Panc1 (cell line): ENCODE measurements at regions of chr11 and their contacts with region 1.

Region 1: DNA sequence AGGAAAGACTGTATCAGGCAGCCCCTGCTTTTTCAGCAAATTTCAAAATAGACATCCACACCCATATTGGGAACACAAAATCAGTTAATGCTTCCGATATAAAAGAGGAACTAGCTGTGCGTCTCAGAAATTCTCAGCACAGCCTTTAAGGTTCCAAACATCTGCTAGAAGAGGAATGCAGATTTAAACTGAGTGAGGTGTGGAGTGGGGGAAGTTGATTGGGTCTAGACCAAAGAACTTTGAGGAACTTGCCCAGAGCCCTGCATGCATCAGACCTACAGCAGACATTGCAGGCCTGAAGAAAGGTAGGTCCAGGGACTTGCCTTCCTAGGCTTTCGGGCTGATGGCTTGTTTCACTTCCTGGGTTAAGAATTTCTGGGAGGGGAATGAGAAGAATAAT is at the start of gene MS4A4A:
- DNase-seq: no peak
- ATAC-seq: no peak
- H3K4me3 ChIP-seq: no peak within 1 kb of the TSS
- H3K27ac ChIP-seq: no peak within 1 kb of the TSS
- H3K4me1 ChIP-seq: no peaks in the 10 kb centered on the region
- H3K27me3 ChIP-seq: no peaks in the 10 kb centered on the region
- CTCF ChIP-seq: no peak
- total RNA-seq, gene MS4A4A: not detected

Region 2: DNA sequence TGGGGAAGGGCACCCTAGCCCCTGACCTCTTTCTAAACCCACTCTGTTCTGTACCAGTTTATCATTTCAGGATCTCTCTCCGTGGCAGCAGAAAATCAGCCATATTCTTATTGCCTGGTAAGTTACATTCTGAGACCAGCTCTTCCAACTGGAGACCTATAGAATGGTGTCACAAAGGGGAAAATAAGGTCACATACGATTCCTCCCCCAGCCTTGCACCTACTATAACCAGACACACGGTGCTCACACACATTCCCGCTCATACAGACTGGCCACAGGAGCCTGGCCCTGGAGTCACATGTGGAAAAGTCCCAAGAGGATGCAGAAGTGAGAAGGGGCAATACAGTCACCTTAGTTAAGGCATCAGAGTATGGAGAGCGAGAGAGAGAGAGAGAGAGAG is 426.5 kb after region 1 on chr11:
- CTCF ChIA-PET with region 1: no interaction called
- POLR2A ChIA-PET with region 1: interaction called, 20 read pairs
- in situ Hi-C with region 1: no loop called
- intact Hi-C with region 1: no loop called
- DNase-seq: no peak
- ATAC-seq: no peak
- H3K4me3 ChIP-seq: no peak overlapping the region
- H3K27ac ChIP-seq: no peak overlapping the region
- H3K4me1 ChIP-seq: no peaks in the 10 kb centered on the region
- H3K27me3 ChIP-seq: peaks cover 9% of the 10 kb centered on the region; the same call in 1 of the 2 replicates
- CTCF ChIP-seq: no peak